ENCODE measurements at regions of chr3 and their contacts with region 1.

Region 1: DNA sequence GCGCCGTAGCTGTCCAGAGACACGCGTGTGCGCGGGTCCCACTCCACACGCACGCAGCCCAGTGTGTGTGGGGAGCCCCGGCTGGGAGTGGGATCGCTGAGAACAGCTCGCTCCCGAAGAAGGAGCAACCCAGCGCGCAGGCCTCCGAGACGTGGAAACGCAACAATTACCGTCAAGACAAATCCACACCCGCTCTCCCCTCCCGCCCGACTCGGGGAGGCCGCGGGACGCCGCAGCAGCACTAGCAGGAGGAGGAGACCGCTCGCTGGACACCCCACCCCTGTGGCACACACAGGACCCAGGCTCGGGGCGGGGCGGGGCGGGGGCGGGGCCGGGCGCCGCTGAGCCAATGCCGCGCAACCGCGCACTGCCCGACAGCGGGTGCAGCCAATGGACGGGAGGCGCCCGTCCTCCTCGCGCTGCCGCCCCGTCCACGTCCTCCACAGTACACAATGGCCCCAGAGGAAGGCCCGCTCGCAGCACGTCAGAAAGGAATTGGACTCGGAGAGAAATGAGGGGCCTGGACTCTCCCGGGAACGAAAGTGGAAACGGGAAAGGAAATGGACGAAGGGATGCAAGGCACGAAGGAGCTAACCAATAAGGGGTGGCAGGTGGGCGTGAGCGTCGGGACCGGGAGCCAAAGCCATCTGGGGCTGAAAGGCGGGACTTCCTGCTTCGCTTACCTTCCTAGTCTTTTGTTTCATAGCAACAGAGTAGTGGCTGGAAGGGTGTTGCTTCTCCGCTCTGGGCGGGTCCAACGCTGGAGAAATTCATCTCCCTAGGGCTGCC is at the start of gene CBLB:
- DNase-seq: peak; percentile 91 to 98 (median 96)
- H3K4me3 ChIP-seq: peak within 1 kb of the TSS; percentile 62 to 92 (median 78)
- H3K27ac ChIP-seq: peak within 1 kb of the TSS; percentile 80 to 98 (median 96)
- H3K4me1 ChIP-seq: peaks cover 25 to 39% of the 10 kb centered on the region in 2 donors
- H3K27me3 ChIP-seq: no peaks in the 10 kb centered on the region
- CTCF ChIP-seq: no peak
- POLR2A ChIP-seq: peak; percentile 78 to 84
- total RNA-seq, gene CBLB: 23.4 to 58.9 (median 37.0) TPM

Region 2: GRCh38 chr3:106004137-106004681 is 135.3 kb after region 1 on chr3:
- intact Hi-C with region 1: loop called in 1 of 2 experiments (anchors 10 kb)
- DNase-seq: peak in 1 of 7 donors; percentile 12
- H3K4me3 ChIP-seq: peak overlapping the region in 2 of 4 donors; percentile 16 to 42
- H3K27ac ChIP-seq: peak overlapping the region; percentile 19 to 90 (median 75)
- H3K4me1 ChIP-seq: peaks cover 5 to 21% of the 10 kb centered on the region in 2 donors
- H3K27me3 ChIP-seq: no peaks in the 10 kb centered on the region
- CTCF ChIP-seq: no peak
- POLR2A ChIP-seq: peak in 1 of 2 donors; percentile 65

Measured in adrenal gland (tissue), 19 donors.